ENCODE measurements at regions of chr17 and their contacts with region 1.

Region 1: GRCh38 chr17:73371285-73371684 is 59.5 kb upstream of the CDC42EP4 start:
- H3K4me3 ChIP-seq: no peak overlapping the region
- H3K27ac ChIP-seq: no peak overlapping the region
- H3K4me1 ChIP-seq: no peaks in the 10 kb centered on the region
- CTCF ChIP-seq: no peak

Region 2: GRCh38 chr17:72985881-72986720 is 385.2 kb before region 1 on chr17:
- CTCF ChIA-PET with region 1: interaction called, 10 read pairs
- POLR2A ChIA-PET with region 1: no interaction called
- H3K4me3 ChIP-seq: no peak overlapping the region
- H3K27ac ChIP-seq: no peak overlapping the region
- H3K4me1 ChIP-seq: peaks cover 6% of the 10 kb centered on the region; the same call in 1 of the 2 replicates
- CTCF ChIP-seq: no peak

Region 3: GRCh38 chr17:73231841-73232586 is 139.3 kb before region 1 on chr17:
- CTCF ChIA-PET with region 1: interaction called, 19 read pairs
- POLR2A ChIA-PET with region 1: interaction called, 3 read pairs
- H3K4me3 ChIP-seq: peak overlapping the region; percentile 93
- H3K27ac ChIP-seq: peak overlapping the region; percentile 74
- H3K4me1 ChIP-seq: peaks cover 13% of the 10 kb centered on the region
- CTCF ChIP-seq: peak; percentile 92

Region 4: DNA sequence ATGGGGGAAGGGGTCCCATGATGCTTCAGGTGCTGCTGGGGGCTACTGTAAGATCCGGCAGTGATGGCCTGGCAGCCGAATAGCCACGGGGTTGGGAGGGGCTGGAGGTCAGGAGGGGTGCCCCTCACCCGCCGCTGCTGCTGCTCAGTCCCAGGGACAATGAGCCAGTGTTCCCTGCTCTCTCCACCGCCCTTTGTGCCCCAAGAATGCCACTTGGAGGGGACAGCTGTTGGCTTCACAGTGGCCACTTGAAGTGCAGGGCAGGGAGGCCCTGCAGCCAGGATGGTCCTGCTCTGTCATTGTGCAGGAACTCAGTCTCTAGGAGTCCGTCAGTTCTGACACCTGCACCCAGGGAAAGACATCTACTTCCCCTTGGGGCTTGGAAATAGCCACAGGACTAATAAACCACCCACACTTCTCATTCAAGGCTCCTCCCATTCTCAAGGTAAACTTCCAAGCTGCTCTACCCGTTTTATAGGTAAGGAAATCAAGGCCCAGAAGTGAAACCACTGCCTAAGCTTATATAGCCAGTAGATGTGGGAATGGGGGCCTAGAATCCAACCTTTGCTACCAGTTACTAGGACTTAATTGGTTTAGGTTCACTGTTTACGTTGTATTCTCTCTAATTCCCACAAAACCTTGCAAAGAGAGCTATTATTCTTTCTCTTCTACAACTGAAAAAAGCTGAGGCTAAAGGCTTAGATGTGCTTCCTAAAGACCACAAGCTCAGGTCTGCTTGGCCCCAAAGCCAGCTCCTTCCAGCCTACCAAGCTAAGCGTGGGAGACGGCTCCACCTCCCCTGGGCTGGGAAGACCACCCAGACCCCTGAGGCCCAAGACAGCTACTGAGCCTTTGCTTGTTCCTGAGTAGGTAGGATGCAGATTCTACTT is 103.4 kb before region 1 on chr17:
- CTCF ChIA-PET with region 1: interaction called, 19 read pairs
- POLR2A ChIA-PET with region 1: no interaction called
- H3K4me3 ChIP-seq: no peak overlapping the region
- H3K27ac ChIP-seq: no peak overlapping the region
- H3K4me1 ChIP-seq: no peaks in the 10 kb centered on the region
- CTCF ChIP-seq: no peak

Region 5: DNA sequence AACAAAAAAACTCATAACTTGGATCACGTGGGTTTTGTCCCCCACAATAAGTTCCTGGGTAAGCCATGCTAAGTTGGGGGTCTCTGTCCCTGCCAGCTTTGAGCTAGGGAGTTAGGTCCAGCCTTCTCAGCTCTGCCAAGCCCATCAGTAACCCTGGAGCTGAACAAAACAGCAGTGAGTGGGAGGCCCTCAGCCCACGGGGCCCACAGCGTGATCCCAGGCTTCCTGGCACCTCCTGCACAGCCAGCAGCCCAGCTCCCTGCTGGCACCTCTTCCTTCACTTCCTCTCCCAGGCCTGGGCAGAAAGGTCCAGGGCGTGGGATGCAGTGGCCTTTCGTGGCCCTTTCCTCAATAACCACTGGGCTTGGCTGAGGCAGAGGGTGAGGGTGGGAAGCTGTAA is 23.9 kb before region 1 on chr17:
- CTCF ChIA-PET with region 1: interaction called, 11 read pairs
- POLR2A ChIA-PET with region 1: no interaction called
- H3K4me3 ChIP-seq: no peak overlapping the region
- H3K27ac ChIP-seq: no peak overlapping the region
- H3K4me1 ChIP-seq: no peaks in the 10 kb centered on the region
- CTCF ChIP-seq: no peak

Measured in HEK293 (cell line).